Caco-2 (cell line): ENCODE measurements at regions of chrX and their contacts with region 1.

Region 1: GRCh38 chrX:135112096-135112729 is 8.1 kb downstream of the ETDB start:
- DNase-seq: peak in 1 of 2 experiments; percentile 46
- H3K4me3 ChIP-seq: no peak overlapping the region
- H3K4me3 Mint-ChIP-seq: no peak overlapping the region
- H3K27ac Mint-ChIP-seq: no peak overlapping the region
- H3K4me1 ChIP-seq: no peaks in the 10 kb centered on the region
- H3K4me1 Mint-ChIP-seq: no peaks in the 10 kb centered on the region
- H3K27me3 ChIP-seq: no peaks in the 10 kb centered on the region
- H3K27me3 Mint-ChIP-seq: peaks cover 5% of the 10 kb centered on the region
- CTCF ChIP-seq: peak; percentile 61 to 66

Region 2: DNA sequence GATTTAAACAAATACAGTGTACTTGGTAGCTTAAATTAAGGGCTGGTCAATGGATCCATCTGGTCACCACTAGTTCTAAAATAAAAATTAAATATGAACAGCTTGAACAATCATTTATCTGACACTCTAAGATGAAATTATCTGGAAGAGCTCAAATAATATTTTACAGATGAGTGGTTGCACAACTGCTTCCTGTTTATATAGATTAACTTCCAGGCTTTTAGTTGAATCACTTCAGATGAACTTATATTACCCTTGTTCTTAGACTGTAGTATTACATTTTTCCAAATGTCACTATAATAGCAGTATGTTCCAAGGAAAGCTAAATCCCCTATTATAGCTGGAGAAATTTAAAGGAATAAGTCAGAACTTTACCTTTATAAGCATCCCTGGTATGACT is 213.8 kb before region 1 on chrX:
- CTCF ChIA-PET with region 1: no interaction called
- POLR2A ChIA-PET with region 1: no interaction called
- intact Hi-C with region 1: no loop called
- DNase-seq: no peak
- H3K4me3 ChIP-seq: no peak overlapping the region
- H3K4me3 Mint-ChIP-seq: no peak overlapping the region
- H3K27ac Mint-ChIP-seq: no peak overlapping the region
- H3K4me1 ChIP-seq: no peaks in the 10 kb centered on the region
- H3K4me1 Mint-ChIP-seq: no peaks in the 10 kb centered on the region
- H3K27me3 ChIP-seq: no peaks in the 10 kb centered on the region
- H3K27me3 Mint-ChIP-seq: no peaks in the 10 kb centered on the region
- CTCF ChIP-seq: no peak

Region 3: GRCh38 chrX:135185795-135186443 is 73.7 kb after region 1 on chrX:
- CTCF ChIA-PET with region 1: interaction called, 15 read pairs
- POLR2A ChIA-PET with region 1: no interaction called
- intact Hi-C with region 1: no loop called
- DNase-seq: peak; percentile 46 to 48
- H3K4me3 ChIP-seq: no peak overlapping the region
- H3K4me3 Mint-ChIP-seq: no peak overlapping the region
- H3K27ac Mint-ChIP-seq: no peak overlapping the region
- H3K4me1 ChIP-seq: no peaks in the 10 kb centered on the region
- H3K4me1 Mint-ChIP-seq: no peaks in the 10 kb centered on the region
- H3K27me3 ChIP-seq: no peaks in the 10 kb centered on the region
- H3K27me3 Mint-ChIP-seq: peaks cover 23% of the 10 kb centered on the region
- CTCF ChIP-seq: peak; percentile 34 to 68

Region 4: DNA sequence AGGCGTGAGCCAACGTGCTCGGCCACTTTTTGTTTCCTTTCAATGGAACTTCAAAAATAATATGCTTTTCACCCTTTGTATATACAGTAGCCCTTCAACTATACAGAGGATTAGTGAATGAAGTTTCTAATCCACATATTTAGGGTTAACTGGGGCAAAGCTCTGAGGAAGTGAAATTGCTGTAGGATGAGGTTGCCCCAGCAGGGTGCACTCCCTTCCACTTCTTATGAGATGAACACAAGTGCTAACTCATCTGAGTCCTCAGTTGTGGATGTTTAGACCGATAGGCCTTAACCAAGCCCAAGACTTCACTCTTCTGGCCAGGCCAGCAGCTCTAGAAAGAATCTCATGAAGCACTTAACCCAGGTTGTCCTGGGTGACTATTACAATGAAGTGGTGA is 88.1 kb after region 1 on chrX:
- CTCF ChIA-PET with region 1: no interaction called
- POLR2A ChIA-PET with region 1: no interaction called
- intact Hi-C with region 1: no loop called
- DNase-seq: no peak
- H3K4me3 ChIP-seq: no peak overlapping the region
- H3K4me3 Mint-ChIP-seq: no peak overlapping the region
- H3K27ac Mint-ChIP-seq: no peak overlapping the region
- H3K4me1 ChIP-seq: no peaks in the 10 kb centered on the region
- H3K4me1 Mint-ChIP-seq: no peaks in the 10 kb centered on the region
- H3K27me3 ChIP-seq: no peaks in the 10 kb centered on the region
- H3K27me3 Mint-ChIP-seq: peaks cover 8% of the 10 kb centered on the region
- CTCF ChIP-seq: no peak

Region 5: DNA sequence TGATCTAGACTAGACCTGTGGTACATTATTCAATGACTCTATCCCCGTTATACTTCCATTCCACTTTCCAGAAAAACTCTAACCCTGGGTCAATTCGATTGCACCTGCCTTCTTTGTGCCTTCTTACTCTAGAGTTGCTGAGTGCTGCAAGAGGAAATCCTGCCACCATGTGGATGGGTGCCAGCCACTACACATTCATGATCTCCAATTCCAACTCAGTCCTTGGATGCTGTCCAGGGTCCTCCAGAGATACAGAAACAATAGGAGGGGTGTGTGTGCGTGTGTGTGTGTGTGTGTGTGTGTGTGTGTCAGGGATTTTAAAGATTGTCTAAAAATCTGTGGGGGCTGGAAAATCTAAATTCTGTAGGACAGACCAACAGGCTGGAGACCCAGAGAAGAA is 365.4 kb after region 1 on chrX:
- CTCF ChIA-PET with region 1: no interaction called
- POLR2A ChIA-PET with region 1: no interaction called
- intact Hi-C with region 1: loop called (anchors 10 kb)
- DNase-seq: peak; percentile 39 to 43
- H3K4me3 ChIP-seq: no peak overlapping the region
- H3K4me3 Mint-ChIP-seq: no peak overlapping the region
- H3K27ac Mint-ChIP-seq: no peak overlapping the region
- H3K4me1 ChIP-seq: no peaks in the 10 kb centered on the region
- H3K4me1 Mint-ChIP-seq: no peaks in the 10 kb centered on the region
- H3K27me3 ChIP-seq: no peaks in the 10 kb centered on the region
- H3K27me3 Mint-ChIP-seq: peaks cover 7% of the 10 kb centered on the region
- CTCF ChIP-seq: peak in 1 of 2 experiments; percentile 51

Region 6: DNA sequence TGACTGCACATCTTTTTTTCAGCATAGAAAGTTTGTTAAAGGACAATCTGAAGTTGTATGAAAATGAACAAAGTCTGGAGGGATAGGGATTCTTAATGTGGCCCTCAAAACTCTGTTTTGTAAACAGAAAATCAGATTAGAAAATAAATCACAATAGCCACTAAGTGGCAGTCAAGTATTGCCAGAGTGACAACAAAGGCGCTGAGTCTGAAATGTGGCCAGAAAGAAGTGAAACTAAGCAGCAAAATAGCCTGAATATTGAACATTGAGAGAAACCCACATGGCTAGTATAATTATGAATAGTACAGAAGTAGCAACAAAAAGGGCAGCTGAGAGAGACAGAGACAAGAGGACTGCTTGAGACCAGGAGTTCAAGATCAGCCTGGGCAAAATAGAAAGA is 520.1 kb after region 1 on chrX:
- CTCF ChIA-PET with region 1: no interaction called
- POLR2A ChIA-PET with region 1: no interaction called
- intact Hi-C with region 1: no loop called
- DNase-seq: no peak
- H3K4me3 ChIP-seq: no peak overlapping the region
- H3K4me3 Mint-ChIP-seq: no peak overlapping the region
- H3K27ac Mint-ChIP-seq: no peak overlapping the region
- H3K4me1 ChIP-seq: no peaks in the 10 kb centered on the region
- H3K4me1 Mint-ChIP-seq: no peaks in the 10 kb centered on the region
- H3K27me3 ChIP-seq: no peaks in the 10 kb centered on the region
- H3K27me3 Mint-ChIP-seq: no peaks in the 10 kb centered on the region
- CTCF ChIP-seq: no peak